Activated CD4-positive, alpha-beta memory T cell treated with anti-CD3 and anti-CD28 coated beads for 36 hours (primary cell): ENCODE measurements at regions of chr2 and their contacts with region 1.

Region 1: DNA sequence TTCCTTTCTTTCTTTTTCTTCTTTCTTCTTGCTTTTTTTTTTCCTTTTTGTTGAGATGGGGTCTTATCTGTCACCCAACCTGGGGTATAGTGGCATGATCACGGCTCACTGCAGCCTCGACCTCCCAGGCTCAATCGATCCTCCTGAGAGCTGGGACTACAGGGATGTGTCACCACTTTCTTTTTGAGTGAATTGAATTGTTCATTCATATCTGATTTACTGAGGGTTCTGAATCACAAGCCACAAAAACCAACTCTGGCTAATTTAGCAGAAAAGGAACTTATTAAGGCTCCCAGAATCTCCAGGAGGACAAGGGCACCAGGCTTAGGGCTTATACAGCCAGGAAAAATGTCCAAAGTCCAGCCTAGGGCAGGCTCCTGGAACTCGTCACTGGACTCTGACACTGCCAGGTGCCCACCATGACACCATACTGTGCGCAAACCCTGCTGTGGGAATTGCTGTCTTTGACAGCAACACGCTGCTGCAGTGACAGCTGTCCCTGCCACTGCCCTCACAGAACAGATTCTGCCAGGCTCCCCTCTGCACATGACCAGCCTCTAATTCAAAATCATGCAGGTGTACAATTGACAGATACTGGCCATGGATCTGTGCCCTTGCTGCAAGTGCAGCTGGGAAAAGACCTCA is 42.9 kb upstream of the EML6 start:
- DNase-seq: peak; percentile 65
- H3K4me3 Mint-ChIP-seq: peak overlapping the region; percentile 47
- H3K27ac Mint-ChIP-seq: no peak overlapping the region
- H3K4me1 Mint-ChIP-seq: peaks cover 21% of the 10 kb centered on the region
- H3K27me3 Mint-ChIP-seq: peaks cover 68% of the 10 kb centered on the region

Region 2: DNA sequence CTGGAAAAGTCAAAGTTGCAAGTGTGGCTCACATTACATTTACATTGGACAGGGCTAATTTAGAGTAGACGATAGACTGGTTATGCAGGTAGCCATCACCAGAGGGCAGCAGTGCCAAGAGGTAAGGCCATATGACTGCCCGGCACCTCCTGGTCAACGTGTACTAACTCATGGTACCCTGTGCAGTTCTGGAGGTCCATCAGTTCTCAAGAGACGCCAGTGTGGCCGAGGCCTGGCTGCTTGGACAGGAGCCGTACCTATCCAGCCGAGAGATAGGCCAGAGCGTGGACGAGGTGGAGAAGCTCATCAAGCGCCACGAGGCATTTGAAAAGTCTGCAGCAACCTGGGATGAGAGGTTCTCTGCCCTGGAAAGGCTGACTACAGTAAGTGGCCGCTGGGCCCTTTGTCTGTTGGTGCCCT is 22.8 kb before region 1 on chr2:
- CTCF ChIA-PET with region 1: interaction called, 76 read pairs
- POLR2A ChIA-PET with region 1: interaction called, 5 read pairs
- intact Hi-C with region 1: loop called (anchors 1 kb)
- DNase-seq: peak; percentile 55
- H3K4me3 Mint-ChIP-seq: no peak overlapping the region
- H3K27ac Mint-ChIP-seq: peak overlapping the region; percentile 57
- H3K4me1 Mint-ChIP-seq: peaks cover 18% of the 10 kb centered on the region
- H3K27me3 Mint-ChIP-seq: no peaks in the 10 kb centered on the region

Region 3: GRCh38 chr2:54665436-54665856 is 15.1 kb before region 1 on chr2:
- CTCF ChIA-PET with region 1: interaction called, 76 read pairs
- POLR2A ChIA-PET with region 1: no interaction called
- intact Hi-C with region 1: loop called (anchors 2 kb)
- DNase-seq: peak; percentile 53
- H3K4me3 Mint-ChIP-seq: no peak overlapping the region
- H3K27ac Mint-ChIP-seq: no peak overlapping the region
- H3K4me1 Mint-ChIP-seq: peaks cover 2% of the 10 kb centered on the region
- H3K27me3 Mint-ChIP-seq: no peaks in the 10 kb centered on the region

Region 4: GRCh38 chr2:54691445-54692135 is 11.1 kb after region 1 on chr2:
- CTCF ChIA-PET with region 1: interaction called, 3 read pairs
- POLR2A ChIA-PET with region 1: no interaction called
- intact Hi-C with region 1: loop called (anchors 1 kb)
- DNase-seq: no peak
- H3K4me3 Mint-ChIP-seq: no peak overlapping the region
- H3K27ac Mint-ChIP-seq: no peak overlapping the region
- H3K4me1 Mint-ChIP-seq: peaks cover 5% of the 10 kb centered on the region
- H3K27me3 Mint-ChIP-seq: peaks cover 18% of the 10 kb centered on the region